Activated CD4-positive, alpha-beta T cell treated with anti-CD3 and anti-CD28 coated beads for 36 hours (primary cell): ENCODE measurements at regions of chr1 and their contacts with region 1.

Region 1: DNA sequence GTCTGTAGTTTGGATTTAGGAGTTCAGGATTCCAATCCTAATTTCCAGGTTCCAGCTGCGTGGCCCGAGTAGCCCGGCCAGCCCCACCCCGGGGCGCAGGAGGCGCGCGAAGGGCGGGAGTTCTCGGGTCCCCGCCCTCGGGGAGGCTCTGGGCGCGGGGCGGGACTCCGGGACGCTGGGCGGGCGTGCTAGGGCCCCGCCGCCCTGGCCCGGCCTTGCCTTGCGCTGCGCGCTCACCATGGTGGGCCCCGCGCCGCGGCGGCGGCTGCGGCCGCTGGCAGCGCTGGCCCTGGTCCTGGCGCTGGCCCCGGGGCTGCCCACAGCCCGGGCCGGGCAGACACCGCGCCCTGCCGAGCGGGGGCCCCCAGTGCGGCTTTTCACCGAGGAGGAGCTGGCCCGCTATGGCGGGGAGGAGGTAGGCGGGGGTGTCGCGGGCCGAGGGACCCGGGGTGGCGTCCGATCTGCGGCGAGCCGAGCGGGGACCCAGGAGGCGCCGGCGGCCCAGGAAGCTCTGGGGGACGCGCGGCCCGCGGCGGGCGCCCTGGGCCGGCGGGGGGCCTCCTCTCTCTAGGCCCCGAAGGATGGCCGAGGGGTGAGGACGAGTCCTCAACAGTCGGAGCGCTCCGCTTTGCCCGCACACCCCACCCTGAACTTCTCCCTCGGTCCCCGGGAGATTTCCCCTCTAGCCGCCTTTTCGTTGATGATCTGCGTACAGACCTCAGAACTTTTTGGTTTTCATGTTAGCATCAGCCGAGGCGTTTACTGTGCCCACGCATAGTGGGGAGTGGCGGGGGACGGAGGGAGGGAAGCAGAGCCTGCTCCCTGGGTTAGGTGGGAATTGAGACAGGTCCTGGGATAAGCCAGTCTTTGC is at the start of gene NENF:
- DNase-seq: peak; percentile 88
- ATAC-seq: peak; percentile 99
- H3K4me3 Mint-ChIP-seq: peak within 1 kb of the TSS; percentile 75
- H3K27ac Mint-ChIP-seq: peak within 1 kb of the TSS; percentile 56
- H3K4me1 Mint-ChIP-seq: peaks cover 39% of the 10 kb centered on the region
- H3K27me3 Mint-ChIP-seq: no peaks in the 10 kb centered on the region
- total RNA-seq, gene NENF: 30.8 to 34.1 TPM

Region 2: GRCh38 chr1:211675230-211676105 is 757.5 kb before region 1 on chr1 and contains the start of gene NEK2:
- CTCF ChIA-PET with region 1: no interaction called
- POLR2A ChIA-PET with region 1: no interaction called
- intact Hi-C with region 1: loop called in 1 of 2 experiments (anchors 2 kb)
- DNase-seq: peak; percentile 94
- ATAC-seq: peak; percentile 98
- H3K4me3 Mint-ChIP-seq: peak within 1 kb of the TSS; percentile 94
- H3K27ac Mint-ChIP-seq: peak within 1 kb of the TSS; percentile 84
- H3K4me1 Mint-ChIP-seq: peaks cover 6% of the 10 kb centered on the region
- H3K27me3 Mint-ChIP-seq: no peaks in the 10 kb centered on the region
- total RNA-seq, gene NEK2: 32.3 to 38.8 TPM

Region 3: DNA sequence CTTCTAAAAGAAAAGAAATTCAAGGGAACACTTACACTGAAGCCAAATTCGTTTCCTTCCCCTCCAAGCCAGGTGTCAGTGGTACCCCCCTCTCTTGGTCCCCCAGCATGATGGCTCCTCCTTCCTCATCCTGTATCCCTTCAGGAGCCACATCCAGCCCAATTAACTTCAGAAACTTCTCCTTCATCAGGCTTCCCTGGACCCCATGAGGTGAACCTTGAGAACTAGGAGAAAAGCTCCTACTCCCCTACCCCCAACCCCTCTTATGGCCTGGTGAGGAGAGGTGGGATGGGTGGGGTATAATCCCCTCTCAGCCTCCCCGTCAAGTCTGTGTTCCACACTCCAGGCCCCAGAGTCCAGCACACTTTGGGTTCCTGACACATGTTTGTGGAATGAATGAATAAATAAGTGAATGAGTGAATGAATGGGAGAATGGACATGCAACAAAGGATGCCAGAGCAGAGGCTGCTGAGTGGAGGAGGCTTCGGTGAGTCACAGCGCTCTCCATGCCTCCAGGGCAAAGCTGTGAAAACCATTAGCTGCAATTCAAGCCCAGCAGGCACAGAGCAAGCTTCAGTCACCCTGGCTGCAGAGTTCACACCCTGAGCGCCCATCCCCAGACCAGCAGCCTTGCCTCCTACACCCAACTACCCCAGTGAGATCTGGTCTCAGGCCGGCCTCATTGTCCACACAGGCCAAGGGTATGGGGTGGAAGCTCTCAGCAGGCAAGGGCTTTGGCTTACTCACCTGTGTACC is 222.9 kb after region 1 on chr1:
- CTCF ChIA-PET with region 1: no interaction called
- POLR2A ChIA-PET with region 1: no interaction called
- intact Hi-C with region 1: no loop called
- DNase-seq: no peak
- ATAC-seq: no peak
- H3K4me3 Mint-ChIP-seq: no peak overlapping the region
- H3K27ac Mint-ChIP-seq: no peak overlapping the region
- H3K4me1 Mint-ChIP-seq: no peaks in the 10 kb centered on the region
- H3K27me3 Mint-ChIP-seq: peaks cover 11% of the 10 kb centered on the region